ENCODE measurements at regions of chr12 and their contacts with region 1.

Region 1: GRCh38 chr12:107402041-107403022 is 283.3 kb upstream of the PWP1 start:
- DNase-seq: peak; percentile 39 to 82 (median 53)
- ATAC-seq: peak; percentile 75
- H3K4me3 ChIP-seq: no peak overlapping the region
- H3K4me3 Mint-ChIP-seq: no peak overlapping the region
- H3K27ac ChIP-seq: no peak overlapping the region
- H3K27ac Mint-ChIP-seq: no peak overlapping the region
- H3K4me1 ChIP-seq: peaks cover 23% of the 10 kb centered on the region
- H3K4me1 Mint-ChIP-seq: peaks cover 40% of the 10 kb centered on the region
- H3K27me3 ChIP-seq: no peaks in the 10 kb centered on the region
- H3K27me3 Mint-ChIP-seq: no peaks in the 10 kb centered on the region
- CTCF ChIP-seq: peak; percentile 71

Region 2: GRCh38 chr12:106149096-106149784 is 1253.1 kb before region 1 on chr12:
- CTCF ChIA-PET with region 1: no interaction called
- POLR2A ChIA-PET with region 1: no interaction called
- intact Hi-C with region 1: no loop called
- DNase-seq: no peak
- ATAC-seq: no peak
- H3K4me3 ChIP-seq: no peak overlapping the region
- H3K4me3 Mint-ChIP-seq: no peak overlapping the region
- H3K27ac ChIP-seq: no peak overlapping the region
- H3K27ac Mint-ChIP-seq: no peak overlapping the region
- H3K4me1 ChIP-seq: no peaks in the 10 kb centered on the region
- H3K4me1 Mint-ChIP-seq: no peaks in the 10 kb centered on the region
- H3K27me3 ChIP-seq: peaks cover 6 to 7% of the 10 kb centered on the region in 2 experiments
- H3K27me3 Mint-ChIP-seq: peaks cover 50% of the 10 kb centered on the region
- CTCF ChIP-seq: peak; percentile 18

Region 3: GRCh38 chr12:107131832-107132616 is 270.3 kb before region 1 on chr12:
- CTCF ChIA-PET with region 1: interaction called, 10 read pairs
- POLR2A ChIA-PET with region 1: interaction called, 7 read pairs
- intact Hi-C with region 1: loop called (anchors 1 kb)
- DNase-seq: peak in 6 of 14 experiments; percentile 5 to 70 (median 44)
- ATAC-seq: peak; percentile 57
- H3K4me3 ChIP-seq: no peak overlapping the region
- H3K4me3 Mint-ChIP-seq: no peak overlapping the region
- H3K27ac ChIP-seq: no peak overlapping the region
- H3K27ac Mint-ChIP-seq: no peak overlapping the region
- H3K4me1 ChIP-seq: peaks cover 7% of the 10 kb centered on the region
- H3K4me1 Mint-ChIP-seq: no peaks in the 10 kb centered on the region
- H3K27me3 ChIP-seq: no peaks in the 10 kb centered on the region
- H3K27me3 Mint-ChIP-seq: no peaks in the 10 kb centered on the region
- CTCF ChIP-seq: peak; percentile 89

Region 4: GRCh38 chr12:107225635-107226034 is 176.7 kb before region 1 on chr12:
- CTCF ChIA-PET with region 1: no interaction called
- POLR2A ChIA-PET with region 1: no interaction called
- intact Hi-C with region 1: loop called (anchors 10 kb)
- DNase-seq: no peak
- ATAC-seq: no peak
- H3K4me3 ChIP-seq: no peak overlapping the region
- H3K4me3 Mint-ChIP-seq: no peak overlapping the region
- H3K27ac ChIP-seq: no peak overlapping the region
- H3K27ac Mint-ChIP-seq: no peak overlapping the region
- H3K4me1 ChIP-seq: no peaks in the 10 kb centered on the region
- H3K4me1 Mint-ChIP-seq: no peaks in the 10 kb centered on the region
- H3K27me3 ChIP-seq: peaks cover 0 to 4% of the 10 kb centered on the region in 2 experiments
- H3K27me3 Mint-ChIP-seq: peaks cover 16% of the 10 kb centered on the region
- CTCF ChIP-seq: no peak

Region 5: DNA sequence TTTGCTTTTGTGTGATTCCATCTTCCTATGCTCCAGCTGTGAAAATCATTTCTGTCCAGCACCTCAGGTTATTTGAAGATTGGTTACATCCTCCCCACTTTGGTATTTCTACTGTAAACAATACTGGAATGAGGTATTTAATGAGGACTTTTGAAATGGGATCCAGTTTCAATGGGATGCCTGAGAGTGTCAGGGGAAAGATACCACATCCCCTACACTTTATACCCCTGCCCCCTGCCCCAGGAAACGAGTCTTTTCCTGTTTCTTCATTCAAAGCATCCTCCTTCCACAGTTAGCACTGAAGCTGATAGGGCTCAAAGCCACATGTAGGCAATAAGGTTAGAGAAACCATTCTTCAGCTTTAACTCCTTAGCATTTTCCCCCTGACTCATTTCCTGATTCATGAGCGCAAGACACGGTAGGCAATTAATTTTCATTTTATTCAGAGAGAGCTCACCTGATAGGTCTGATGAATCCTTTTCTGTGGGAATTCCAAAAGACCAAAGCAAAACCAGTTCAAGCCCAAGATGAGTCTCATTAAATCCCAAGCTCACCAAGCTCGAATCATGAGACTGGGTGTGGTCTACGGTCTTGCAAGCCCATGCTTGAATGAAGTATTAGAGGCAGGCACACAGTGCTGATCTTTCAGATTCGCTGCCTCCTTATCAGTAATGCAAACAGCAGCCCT is 165.4 kb before region 1 on chr12:
- CTCF ChIA-PET with region 1: no interaction called
- POLR2A ChIA-PET with region 1: no interaction called
- intact Hi-C with region 1: no loop called
- DNase-seq: no peak
- ATAC-seq: no peak
- H3K4me3 ChIP-seq: no peak overlapping the region
- H3K4me3 Mint-ChIP-seq: no peak overlapping the region
- H3K27ac ChIP-seq: no peak overlapping the region
- H3K27ac Mint-ChIP-seq: no peak overlapping the region
- H3K4me1 ChIP-seq: peaks cover 4% of the 10 kb centered on the region
- H3K4me1 Mint-ChIP-seq: peaks cover 18% of the 10 kb centered on the region
- H3K27me3 ChIP-seq: no peaks in the 10 kb centered on the region
- H3K27me3 Mint-ChIP-seq: no peaks in the 10 kb centered on the region
- CTCF ChIP-seq: no peak

Region 6: DNA sequence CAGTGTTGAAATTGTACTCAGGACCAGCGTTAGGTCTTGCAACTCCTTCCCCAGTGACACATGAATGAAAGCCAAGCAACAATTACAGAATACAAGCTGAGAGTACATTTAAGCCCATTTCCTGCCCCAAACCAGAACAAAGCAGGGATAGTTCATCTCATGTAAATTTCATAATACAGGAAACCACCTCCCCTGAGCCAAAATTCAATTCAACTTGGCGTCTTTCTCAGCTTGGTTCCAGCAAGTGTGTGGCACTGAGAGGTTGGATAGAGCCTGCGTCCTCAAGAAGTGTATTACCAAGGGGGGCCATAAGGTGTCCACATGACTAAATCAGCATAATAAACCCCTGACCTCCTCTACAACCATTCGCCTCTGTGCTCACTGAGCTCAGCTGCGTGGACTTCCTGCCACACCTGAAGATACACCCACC is 30.1 kb before region 1 on chr12:
- CTCF ChIA-PET with region 1: interaction called, 7 read pairs
- POLR2A ChIA-PET with region 1: interaction called, 10 read pairs
- intact Hi-C with region 1: no loop called
- DNase-seq: peak in 9 of 14 experiments; percentile 9 to 85 (median 30)
- ATAC-seq: peak; percentile 74
- H3K4me3 ChIP-seq: peak overlapping the region; percentile 4
- H3K4me3 Mint-ChIP-seq: peak overlapping the region; percentile 68
- H3K27ac ChIP-seq: peak overlapping the region; percentile 54 to 69
- H3K27ac Mint-ChIP-seq: peak overlapping the region; percentile 86
- H3K4me1 ChIP-seq: peaks cover 72% of the 10 kb centered on the region
- H3K4me1 Mint-ChIP-seq: peaks cover 87% of the 10 kb centered on the region
- H3K27me3 ChIP-seq: no peaks in the 10 kb centered on the region
- H3K27me3 Mint-ChIP-seq: no peaks in the 10 kb centered on the region
- CTCF ChIP-seq: no peak

Region 7: DNA sequence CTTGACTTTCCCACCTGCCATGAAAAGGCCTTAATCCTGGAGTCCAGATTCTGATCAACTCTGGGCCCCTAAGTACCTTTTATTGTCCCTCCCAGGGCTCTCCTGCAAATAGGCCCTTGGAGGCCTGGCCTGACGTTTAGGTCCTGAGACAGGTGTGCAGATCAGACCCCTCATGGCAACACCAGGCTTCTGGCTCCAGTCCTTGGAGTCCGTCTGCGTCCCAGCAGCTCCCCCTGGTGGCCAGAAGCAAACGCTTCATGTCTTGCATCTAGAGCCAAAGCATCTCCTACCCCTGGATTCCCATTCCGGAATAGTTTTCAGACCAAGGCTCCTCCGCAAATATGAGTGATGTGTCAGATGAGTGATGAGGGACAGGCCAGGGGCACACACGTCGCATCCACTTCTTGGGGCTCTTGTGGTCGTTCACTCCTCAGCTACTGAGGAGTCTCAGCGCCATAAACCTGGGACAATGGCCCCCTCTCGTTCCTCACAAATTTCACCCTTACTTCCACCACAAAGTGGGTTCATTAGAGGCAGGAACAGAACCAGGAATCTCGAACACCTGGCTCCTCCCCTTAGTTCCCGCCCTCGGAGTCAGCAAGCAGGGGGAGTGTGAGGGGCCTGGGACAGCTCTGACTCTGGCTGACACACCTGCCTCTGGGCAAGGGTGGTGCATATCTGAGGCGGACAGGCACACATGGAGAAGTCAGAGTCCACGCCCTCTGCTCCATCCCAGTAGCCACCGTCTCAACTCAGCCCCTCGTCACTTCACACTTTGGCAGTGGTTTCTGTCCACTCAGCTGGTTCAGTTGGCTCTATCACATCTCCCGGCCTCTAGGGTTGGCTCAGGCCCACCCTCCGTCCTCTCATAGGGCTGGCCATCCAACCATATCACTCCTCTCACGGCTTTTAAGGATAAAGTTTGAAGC is 205.4 kb after region 1 on chr12:
- CTCF ChIA-PET with region 1: no interaction called
- POLR2A ChIA-PET with region 1: no interaction called
- intact Hi-C with region 1: loop called (anchors 2 to 5 kb)
- DNase-seq: peak; percentile 73 to 90 (median 76)
- ATAC-seq: peak; percentile 76
- H3K4me3 ChIP-seq: no peak overlapping the region
- H3K4me3 Mint-ChIP-seq: no peak overlapping the region
- H3K27ac ChIP-seq: no peak overlapping the region
- H3K27ac Mint-ChIP-seq: no peak overlapping the region
- H3K4me1 ChIP-seq: no peaks in the 10 kb centered on the region
- H3K4me1 Mint-ChIP-seq: no peaks in the 10 kb centered on the region
- H3K27me3 ChIP-seq: no peaks in the 10 kb centered on the region
- H3K27me3 Mint-ChIP-seq: no peaks in the 10 kb centered on the region
- CTCF ChIP-seq: peak; percentile 95